Activated B cell treated with CpG ODN at 0.5 μM for 24 hours (primary cell): ENCODE measurements at regions of chr2 and their contacts with region 1.

Region 1: GRCh38 chr2:68418855-68419254 is 48.2 kb downstream of the FBXO48 start:
- DNase-seq: no peak
- ATAC-seq: no peak
- H3K4me3 Mint-ChIP-seq: no peak overlapping the region
- H3K27ac Mint-ChIP-seq: peak overlapping the region; percentile 67
- H3K4me1 Mint-ChIP-seq: peaks cover 81% of the 10 kb centered on the region
- H3K27me3 Mint-ChIP-seq: no peaks in the 10 kb centered on the region
- CTCF ChIP-seq: no peak

Region 2: GRCh38 chr2:68403199-68403644 is 15.6 kb before region 1 on chr2:
- CTCF ChIA-PET with region 1: interaction called, 5 read pairs
- POLR2A ChIA-PET with region 1: interaction called, 11 read pairs
- intact Hi-C with region 1: loop called (anchors 1 kb)
- DNase-seq: peak; percentile 43
- ATAC-seq: peak; percentile 89
- H3K4me3 Mint-ChIP-seq: peak overlapping the region; percentile 63
- H3K27ac Mint-ChIP-seq: peak overlapping the region; percentile 88
- H3K4me1 Mint-ChIP-seq: peaks cover 98% of the 10 kb centered on the region
- H3K27me3 Mint-ChIP-seq: no peaks in the 10 kb centered on the region
- CTCF ChIP-seq: no peak